Ascending aorta (tissue), 2 donors: ENCODE measurements at regions of chr1 and their contacts with region 1.

Region 1: DNA sequence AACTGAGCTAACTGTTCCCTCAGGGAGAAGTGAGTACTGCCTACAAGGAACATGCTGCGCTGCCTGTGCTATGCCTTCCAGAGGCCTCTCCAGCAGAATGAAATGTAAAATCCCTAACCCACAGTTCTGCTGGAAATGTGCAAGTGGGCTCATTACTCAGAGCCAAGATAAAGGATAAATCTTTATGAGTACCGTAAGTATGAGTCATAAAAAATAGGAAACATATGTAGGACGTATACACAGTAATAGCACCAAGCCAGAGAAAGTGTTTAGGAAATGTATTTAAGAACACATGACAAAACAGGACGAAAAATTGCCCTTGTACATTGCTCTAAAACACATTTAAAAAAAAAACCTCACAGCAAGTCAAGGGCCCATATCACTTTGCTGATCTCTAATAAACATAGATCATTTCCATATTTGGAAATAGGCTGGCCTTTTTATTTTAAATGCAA is 104.6 kb downstream of the TGFBR3 start:
- DNase-seq: peak in 1 of 2 donors; percentile 41
- H3K4me3 ChIP-seq: peak overlapping the region in 1 of 2 donors; percentile 17
- H3K27ac ChIP-seq: peak overlapping the region; percentile 77 to 85
- H3K4me1 ChIP-seq: peaks cover 0 to 34% of the 10 kb centered on the region in 2 donors
- H3K27me3 ChIP-seq: no peaks in the 10 kb centered on the region
- CTCF ChIP-seq: no peak

Region 2: GRCh38 chr1:91412371-91412770 is 369.0 kb before region 1 on chr1:
- intact Hi-C with region 1: no loop called
- DNase-seq: no peak
- H3K4me3 ChIP-seq: no peak overlapping the region
- H3K27ac ChIP-seq: no peak overlapping the region
- H3K4me1 ChIP-seq: no peaks in the 10 kb centered on the region
- H3K27me3 ChIP-seq: no peaks in the 10 kb centered on the region
- CTCF ChIP-seq: no peak

Region 3: DNA sequence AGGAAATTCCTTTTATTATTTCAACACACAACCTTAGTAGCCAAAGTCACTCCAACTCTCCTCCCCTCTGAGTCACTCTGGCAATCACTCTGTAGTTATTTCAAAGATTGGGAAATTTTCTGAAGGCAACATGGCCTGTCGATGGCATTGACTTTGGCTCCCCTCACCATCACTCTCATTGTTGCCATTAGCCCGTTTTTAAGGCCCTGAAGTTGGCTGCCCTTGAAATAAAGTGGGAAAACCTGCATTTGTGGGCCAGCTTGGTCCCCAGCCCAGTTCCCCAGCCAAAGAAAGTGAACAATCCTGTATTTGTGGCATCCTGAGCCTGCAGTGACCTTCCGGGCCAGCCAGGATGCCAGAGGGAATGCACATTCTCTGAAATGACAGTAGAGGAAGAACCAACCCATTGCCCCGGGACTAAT is 228.2 kb before region 1 on chr1:
- intact Hi-C with region 1: loop called (anchors 5 kb)
- DNase-seq: peak in 1 of 2 donors; percentile 79
- H3K4me3 ChIP-seq: no peak overlapping the region
- H3K27ac ChIP-seq: peak overlapping the region; percentile 59 to 63
- H3K4me1 ChIP-seq: peaks cover 3 to 9% of the 10 kb centered on the region in 2 donors
- H3K27me3 ChIP-seq: no peaks in the 10 kb centered on the region
- CTCF ChIP-seq: no peak

Region 4: DNA sequence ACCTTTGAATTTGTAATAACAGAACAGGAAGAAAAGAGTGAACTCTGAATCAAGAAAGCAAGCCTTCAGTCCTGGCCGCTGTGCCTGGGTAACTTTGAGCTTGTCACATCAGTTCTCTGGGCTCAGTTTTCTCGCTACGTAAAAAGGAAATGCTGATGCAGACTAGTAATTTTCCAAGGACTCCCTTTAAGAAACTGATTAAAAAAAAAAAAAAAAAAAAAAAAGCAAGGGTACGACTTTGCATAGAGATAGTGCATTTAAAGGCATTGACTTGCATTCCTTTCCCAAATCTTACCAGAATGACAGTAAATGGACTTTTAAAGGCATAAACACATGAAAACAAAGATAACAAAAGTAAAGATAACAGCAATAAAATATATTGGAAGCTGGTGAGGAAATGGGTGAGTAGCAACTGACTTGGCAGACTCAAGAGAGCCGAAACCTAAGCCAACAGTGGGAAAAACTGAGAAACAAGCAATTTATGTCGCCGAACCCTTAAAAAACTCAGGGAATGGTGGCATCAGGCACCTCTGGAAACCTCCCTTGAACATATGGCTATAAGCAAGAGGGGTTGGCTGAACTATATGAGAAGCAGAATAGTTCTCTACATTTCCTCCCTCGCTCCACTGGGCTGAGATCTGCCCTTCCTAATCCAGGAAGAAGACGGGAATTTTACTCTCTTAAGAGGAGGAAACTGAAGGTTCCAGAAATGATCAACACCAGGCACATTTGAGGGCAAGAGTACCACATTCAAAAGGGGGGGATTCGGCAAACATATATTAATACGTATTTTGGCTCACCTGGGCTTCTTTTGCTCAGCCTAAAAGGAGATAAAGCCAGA is 91.5 kb before region 1 on chr1:
- intact Hi-C with region 1: loop called (anchors 2 kb)
- DNase-seq: no peak
- H3K4me3 ChIP-seq: peak overlapping the region in 1 of 2 donors; percentile 31
- H3K27ac ChIP-seq: peak overlapping the region; percentile 68 to 78
- H3K4me1 ChIP-seq: peaks cover 0 to 35% of the 10 kb centered on the region in 2 donors
- H3K27me3 ChIP-seq: no peaks in the 10 kb centered on the region
- CTCF ChIP-seq: no peak

Region 5: GRCh38 chr1:91732291-91733107 is 48.9 kb before region 1 on chr1:
- intact Hi-C with region 1: no loop called
- DNase-seq: no peak
- H3K4me3 ChIP-seq: no peak overlapping the region
- H3K27ac ChIP-seq: peak overlapping the region in 1 of 2 donors; percentile 17
- H3K4me1 ChIP-seq: peaks cover 0 to 28% of the 10 kb centered on the region in 2 donors
- H3K27me3 ChIP-seq: no peaks in the 10 kb centered on the region
- CTCF ChIP-seq: no peak

Region 6: GRCh38 chr1:91742848-91743292 is 38.5 kb before region 1 on chr1:
- intact Hi-C with region 1: loop called (anchors 5 kb)
- DNase-seq: peak; percentile 37 to 88
- H3K4me3 ChIP-seq: no peak overlapping the region
- H3K27ac ChIP-seq: peak overlapping the region; percentile 44 to 60
- H3K4me1 ChIP-seq: peaks cover 3 to 34% of the 10 kb centered on the region in 2 donors
- H3K27me3 ChIP-seq: no peaks in the 10 kb centered on the region
- CTCF ChIP-seq: no peak